ENCODE measurements at regions of chr11 and their contacts with region 1.

Region 1: GRCh38 chr11:32176223-32176934 is 85.5 kb downstream of the RCN1 start:
- DNase-seq: peak; percentile 83
- H3K4me3 ChIP-seq: no peak overlapping the region
- H3K27ac ChIP-seq: no peak overlapping the region
- H3K4me1 ChIP-seq: no peaks in the 10 kb centered on the region
- H3K27me3 ChIP-seq: no peaks in the 10 kb centered on the region
- CTCF ChIP-seq: peak; percentile 91

Region 2: GRCh38 chr11:31240338-31240904 is 936.0 kb before region 1 on chr11:
- intact Hi-C with region 1: loop called (anchors 10 kb)
- DNase-seq: no peak
- H3K4me3 ChIP-seq: no peak overlapping the region
- H3K27ac ChIP-seq: no peak overlapping the region
- H3K4me1 ChIP-seq: no peaks in the 10 kb centered on the region
- H3K27me3 ChIP-seq: no peaks in the 10 kb centered on the region
- CTCF ChIP-seq: peak; percentile 21

Region 3: GRCh38 chr11:31844351-31844750 is 332.0 kb before region 1 on chr11:
- intact Hi-C with region 1: no loop called
- DNase-seq: no peak
- H3K4me3 ChIP-seq: no peak overlapping the region
- H3K27ac ChIP-seq: no peak overlapping the region
- H3K4me1 ChIP-seq: no peaks in the 10 kb centered on the region
- H3K27me3 ChIP-seq: no peaks in the 10 kb centered on the region
- CTCF ChIP-seq: no peak

Region 4: DNA sequence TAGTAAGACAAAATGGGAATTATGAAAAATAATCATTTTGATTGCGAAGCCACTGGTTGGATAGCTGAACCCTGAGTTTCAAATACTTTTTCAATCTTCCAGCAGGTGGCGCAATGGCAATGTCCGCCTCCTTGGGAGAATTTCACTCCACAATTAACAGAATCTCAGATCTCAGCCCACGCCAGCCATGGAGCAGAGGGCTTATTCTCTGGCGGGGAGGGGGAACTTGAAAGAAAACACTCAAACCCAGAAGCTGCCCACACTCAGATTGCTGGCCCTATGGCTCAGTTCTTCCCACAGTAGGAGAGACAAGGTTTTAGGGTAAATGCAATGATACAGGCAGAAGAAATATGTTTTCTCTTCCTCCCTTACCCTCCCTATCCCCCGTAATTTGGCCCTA is 124.2 kb before region 1 on chr11:
- intact Hi-C with region 1: loop called (anchors 1 kb)
- DNase-seq: peak; percentile 40
- H3K4me3 ChIP-seq: no peak overlapping the region
- H3K27ac ChIP-seq: no peak overlapping the region
- H3K4me1 ChIP-seq: no peaks in the 10 kb centered on the region
- H3K27me3 ChIP-seq: no peaks in the 10 kb centered on the region
- CTCF ChIP-seq: peak; percentile 73